Heart right ventricle (tissue), 16 donors: ENCODE measurements at regions of chr13 and their contacts with region 1.

Region 1: GRCh38 chr13:66200555-66200954 is 1029.6 kb downstream of the PCDH9 start:
- DNase-seq: no peak
- ATAC-seq: no peak
- H3K4me3 ChIP-seq: no peak overlapping the region
- H3K27ac ChIP-seq: no peak overlapping the region
- H3K4me1 ChIP-seq: no peaks in the 10 kb centered on the region
- H3K27me3 ChIP-seq: no peaks in the 10 kb centered on the region
- CTCF ChIP-seq: no peak

Region 2: DNA sequence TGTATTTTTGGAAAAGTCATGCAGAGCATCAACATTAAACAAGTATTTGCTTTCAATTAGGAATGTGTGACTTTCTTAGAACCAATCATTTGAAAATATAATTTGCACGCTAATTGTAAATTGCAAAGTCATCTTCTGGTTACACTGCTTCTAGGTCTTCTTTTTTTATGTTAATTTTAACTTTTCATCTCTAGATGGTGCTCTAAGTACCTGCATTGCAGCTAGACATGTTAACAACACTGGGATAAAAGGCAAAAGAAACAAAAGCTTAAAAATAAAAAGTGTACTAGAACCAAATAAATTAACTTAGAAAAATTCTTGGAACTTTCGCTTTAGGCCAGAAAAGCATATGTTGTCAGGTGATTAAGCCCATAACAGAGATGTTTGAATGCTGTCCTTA is 1728.6 kb before region 1 on chr13:
- intact Hi-C with region 1: loop called in 1 of 10 experiments (anchors 5 kb)
- DNase-seq: no peak
- ATAC-seq: no peak
- H3K4me3 ChIP-seq: no peak overlapping the region
- H3K27ac ChIP-seq: no peak overlapping the region
- H3K4me1 ChIP-seq: no peaks in the 10 kb centered on the region
- H3K27me3 ChIP-seq: no peaks in the 10 kb centered on the region
- CTCF ChIP-seq: peak in 5 of 9 donors; percentile 6 to 57 (median 44)